HepG2 (cell line): ENCODE measurements at regions of chr13 and their contacts with region 1.

Region 1: DNA sequence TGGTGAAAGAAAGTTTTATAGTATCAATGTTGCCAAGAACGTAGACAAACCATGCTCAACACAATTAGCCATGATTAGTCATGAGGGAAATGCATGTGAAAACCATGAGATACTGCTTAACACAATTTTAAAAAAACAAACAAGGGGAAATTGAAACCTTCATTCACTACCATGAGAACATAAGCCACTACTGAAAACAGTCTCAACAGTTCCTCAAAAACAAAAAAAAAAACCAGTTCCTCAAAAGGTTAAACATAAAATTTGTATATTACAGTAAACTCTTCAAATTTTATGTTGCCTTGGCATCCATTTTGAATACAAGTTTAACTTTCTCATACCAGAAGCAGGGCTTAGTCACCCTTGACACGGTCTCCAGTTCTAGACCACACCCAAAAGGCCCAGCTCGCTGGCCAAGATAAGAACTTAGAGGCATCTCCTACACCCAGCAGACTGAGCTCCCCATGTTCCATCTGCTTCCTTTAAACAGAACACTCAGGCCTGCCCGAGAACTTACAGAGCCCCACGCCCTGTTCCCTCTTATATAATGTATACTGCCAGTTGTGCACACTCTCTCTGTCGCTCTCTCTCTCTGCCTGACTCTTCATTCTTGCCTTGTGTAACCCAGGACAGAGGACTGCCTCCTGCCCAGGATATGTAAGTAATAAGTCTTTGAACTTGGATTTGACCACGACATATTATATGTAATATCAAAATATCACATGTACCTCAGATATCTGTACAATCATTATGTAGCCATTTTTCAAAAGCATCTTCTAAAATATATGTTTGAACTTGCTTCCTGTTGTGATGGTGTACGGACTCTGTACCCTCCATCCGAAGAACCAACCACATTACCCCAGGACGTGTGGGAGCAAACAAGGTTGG is 67.4 kb downstream of the STK24 start:
- DNase-seq: peak; percentile 30
- ATAC-seq: no peak
- H3K4me3 ChIP-seq: no peak overlapping the region
- H3K27ac ChIP-seq: no peak overlapping the region
- H3K4me1 ChIP-seq: peaks cover 84% of the 10 kb centered on the region
- H3K27me3 ChIP-seq: no peaks in the 10 kb centered on the region
- CTCF ChIP-seq: no peak
- EP300 ChIP-seq: no peak
- POLR2A ChIP-seq: no peak
- RAD21 ChIP-seq: no peak

Region 2: GRCh38 chr13:98327371-98328270 is 181.9 kb before region 1 on chr13:
- CTCF ChIA-PET with region 1: no interaction called
- POLR2A ChIA-PET with region 1: no interaction called
- in situ Hi-C with region 1: no loop called
- intact Hi-C with region 1: no loop called
- DNase-seq: peak; percentile 88
- ATAC-seq: peak; percentile 90
- H3K4me3 ChIP-seq: no peak overlapping the region
- H3K27ac ChIP-seq: peak overlapping the region; percentile 38
- H3K4me1 ChIP-seq: peaks cover 73% of the 10 kb centered on the region
- H3K27me3 ChIP-seq: no peaks in the 10 kb centered on the region
- CTCF ChIP-seq: no peak
- EP300 ChIP-seq: peak in 1 of 2 experiments; percentile 16; a peak in 2 of 4 replicates
- POLR2A ChIP-seq: no peak
- RAD21 ChIP-seq: no peak

Region 3: DNA sequence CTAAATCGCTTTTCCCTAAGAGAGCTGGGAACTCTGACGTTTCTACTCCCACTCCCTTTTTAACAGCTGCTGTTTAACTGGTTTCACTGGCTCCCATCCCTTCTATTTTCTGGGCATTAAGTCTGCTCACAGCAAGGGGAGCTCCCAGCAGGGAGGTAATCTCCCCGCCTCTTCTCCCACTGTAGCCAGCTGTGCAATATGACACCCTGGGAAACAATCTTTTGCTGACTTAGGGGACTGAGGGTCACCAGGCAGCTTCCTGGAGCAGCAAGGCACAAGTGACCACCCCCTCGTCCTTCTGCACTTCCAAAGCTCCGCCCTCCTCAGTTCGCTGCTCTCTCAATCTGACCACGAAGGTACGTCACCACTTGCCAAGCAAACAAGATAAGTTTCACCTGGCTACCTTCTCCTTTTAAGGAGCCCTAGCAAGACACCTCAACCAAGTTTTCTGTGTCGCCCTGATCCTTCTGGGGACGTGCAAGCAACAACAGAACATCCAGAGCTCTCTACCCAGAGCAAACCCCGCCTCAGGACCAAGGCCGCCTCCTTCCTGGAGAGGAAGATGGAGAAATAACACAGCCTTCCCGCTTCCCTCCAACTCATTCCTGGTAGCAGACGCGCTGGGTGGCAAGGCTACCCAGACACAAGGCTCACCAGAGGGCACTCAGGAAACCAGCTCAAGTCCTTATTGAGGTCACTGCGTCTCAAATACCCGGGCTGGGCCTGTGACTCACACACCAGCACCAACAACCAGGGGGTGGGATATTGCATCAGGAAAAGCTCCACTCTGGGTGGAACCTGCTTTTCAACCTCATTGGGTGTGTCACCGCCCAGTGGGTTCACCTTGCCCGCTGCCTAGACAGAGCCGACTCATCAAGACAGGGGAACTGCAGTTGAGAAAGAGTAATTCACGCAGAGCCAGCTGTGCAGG is 25.0 kb before region 1 on chr13:
- CTCF ChIA-PET with region 1: no interaction called
- POLR2A ChIA-PET with region 1: interaction called, 21 read pairs
- in situ Hi-C with region 1: no loop called
- intact Hi-C with region 1: no loop called
- DNase-seq: peak; percentile 91
- ATAC-seq: peak; percentile 93
- H3K4me3 ChIP-seq: peak overlapping the region; percentile 23 to 66 (median 34); a peak in 5 of 6 replicates
- H3K27ac ChIP-seq: peak overlapping the region; percentile 88
- H3K4me1 ChIP-seq: peaks cover 92% of the 10 kb centered on the region
- H3K27me3 ChIP-seq: no peaks in the 10 kb centered on the region
- CTCF ChIP-seq: no peak
- EP300 ChIP-seq: peak in 1 of 2 experiments; percentile 24; a peak in 1 of 4 replicates
- POLR2A ChIP-seq: no peak
- RAD21 ChIP-seq: no peak

Region 4: DNA sequence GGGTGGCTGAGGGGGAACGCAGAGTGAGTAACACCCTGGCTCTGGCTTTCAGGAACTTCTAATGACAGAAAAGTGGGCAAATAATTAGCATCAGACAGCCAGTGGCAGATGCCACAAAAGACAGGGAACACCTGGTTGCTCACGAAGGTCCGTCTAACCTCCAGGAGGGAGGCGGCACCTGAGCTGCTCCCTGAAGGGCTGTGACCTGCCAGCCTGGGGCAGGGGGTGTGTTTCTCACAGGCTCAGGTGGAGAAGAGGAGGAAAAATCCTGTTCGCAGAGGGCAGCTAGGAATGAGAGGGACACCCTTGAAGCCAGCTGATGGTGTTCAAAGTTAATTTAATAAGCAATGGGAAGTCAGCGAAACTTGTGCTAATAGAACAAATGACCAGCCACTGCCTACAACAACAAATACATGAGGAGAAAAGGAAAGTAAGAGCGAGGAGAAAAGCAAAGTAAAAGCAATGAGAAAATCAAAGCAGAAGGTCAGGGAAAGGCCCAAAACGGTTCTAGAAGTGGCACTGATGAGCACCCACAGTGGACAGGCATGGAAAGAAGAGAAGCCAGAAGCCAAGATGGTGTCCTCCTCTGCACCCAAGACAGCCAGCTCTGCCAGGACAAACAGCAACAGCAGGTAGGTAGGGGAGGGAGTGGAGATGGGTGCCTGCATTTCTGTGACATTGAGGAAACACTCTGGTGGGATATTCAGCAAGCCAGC is 19.9 kb before region 1 on chr13:
- CTCF ChIA-PET with region 1: no interaction called
- POLR2A ChIA-PET with region 1: interaction called, 21 read pairs
- in situ Hi-C with region 1: no loop called
- intact Hi-C with region 1: loop called (anchors 2 kb)
- DNase-seq: no peak
- ATAC-seq: no peak
- H3K4me3 ChIP-seq: peak overlapping the region in 1 of 3 experiments; percentile 29; a peak in 1 of 6 replicates
- H3K27ac ChIP-seq: peak overlapping the region; percentile 90
- H3K4me1 ChIP-seq: peaks cover 94% of the 10 kb centered on the region
- H3K27me3 ChIP-seq: no peaks in the 10 kb centered on the region
- CTCF ChIP-seq: no peak
- EP300 ChIP-seq: no peak
- POLR2A ChIP-seq: no peak
- RAD21 ChIP-seq: no peak

Region 5: GRCh38 chr13:98528663-98529570 is 19.4 kb after region 1 on chr13:
- CTCF ChIA-PET with region 1: no interaction called
- POLR2A ChIA-PET with region 1: no interaction called
- in situ Hi-C with region 1: no loop called
- intact Hi-C with region 1: no loop called
- DNase-seq: no peak
- ATAC-seq: no peak
- H3K4me3 ChIP-seq: no peak overlapping the region
- H3K27ac ChIP-seq: no peak overlapping the region
- H3K4me1 ChIP-seq: peaks cover 7% of the 10 kb centered on the region
- H3K27me3 ChIP-seq: no peaks in the 10 kb centered on the region; a peak in 1 of 5 replicates
- CTCF ChIP-seq: no peak
- EP300 ChIP-seq: no peak
- POLR2A ChIP-seq: no peak
- RAD21 ChIP-seq: no peak

Region 6: GRCh38 chr13:98570929-98571372 is 61.4 kb after region 1 on chr13:
- CTCF ChIA-PET with region 1: no interaction called
- POLR2A ChIA-PET with region 1: interaction called, 5 read pairs
- in situ Hi-C with region 1: no loop called
- intact Hi-C with region 1: loop called (anchors 5 kb)
- DNase-seq: peak; percentile 77
- ATAC-seq: peak; percentile 75
- H3K4me3 ChIP-seq: peak overlapping the region; percentile 11 to 59 (median 39)
- H3K27ac ChIP-seq: peak overlapping the region; percentile 74
- H3K4me1 ChIP-seq: peaks cover 90% of the 10 kb centered on the region
- H3K27me3 ChIP-seq: no peaks in the 10 kb centered on the region; a peak in 1 of 5 replicates
- CTCF ChIP-seq: no peak
- EP300 ChIP-seq: no peak
- POLR2A ChIP-seq: peak in 1 of 2 experiments; percentile 30; a peak in 1 of 4 replicates
- RAD21 ChIP-seq: no peak

Region 7: GRCh38 chr13:98576963-98577822 is 67.7 kb after region 1 on chr13 and contains the start of gene STK24:
- CTCF ChIA-PET with region 1: no interaction called
- POLR2A ChIA-PET with region 1: interaction called, 11 read pairs
- in situ Hi-C with region 1: no loop called
- intact Hi-C with region 1: loop called (anchors 5 kb)
- DNase-seq: peak; percentile 34
- ATAC-seq: peak; percentile 63
- H3K4me3 ChIP-seq: peak within 1 kb of the TSS; percentile 89 to 96 (median 95)
- H3K27ac ChIP-seq: peak within 1 kb of the TSS; percentile 96
- H3K4me1 ChIP-seq: peaks cover 46% of the 10 kb centered on the region
- H3K27me3 ChIP-seq: no peaks in the 10 kb centered on the region; a peak in 1 of 5 replicates
- CTCF ChIP-seq: no peak
- EP300 ChIP-seq: no peak
- POLR2A ChIP-seq: peak in 1 of 2 experiments; percentile 84; a peak in 3 of 4 replicates
- RAD21 ChIP-seq: peak; percentile 10; the same call in 1 of the 2 replicates
- total RNA-seq, gene STK24: 73.0 and 78.3 TPM in 2 replicates